ENCODE measurements at regions of chr6 and their contacts with region 1.

Region 1: DNA sequence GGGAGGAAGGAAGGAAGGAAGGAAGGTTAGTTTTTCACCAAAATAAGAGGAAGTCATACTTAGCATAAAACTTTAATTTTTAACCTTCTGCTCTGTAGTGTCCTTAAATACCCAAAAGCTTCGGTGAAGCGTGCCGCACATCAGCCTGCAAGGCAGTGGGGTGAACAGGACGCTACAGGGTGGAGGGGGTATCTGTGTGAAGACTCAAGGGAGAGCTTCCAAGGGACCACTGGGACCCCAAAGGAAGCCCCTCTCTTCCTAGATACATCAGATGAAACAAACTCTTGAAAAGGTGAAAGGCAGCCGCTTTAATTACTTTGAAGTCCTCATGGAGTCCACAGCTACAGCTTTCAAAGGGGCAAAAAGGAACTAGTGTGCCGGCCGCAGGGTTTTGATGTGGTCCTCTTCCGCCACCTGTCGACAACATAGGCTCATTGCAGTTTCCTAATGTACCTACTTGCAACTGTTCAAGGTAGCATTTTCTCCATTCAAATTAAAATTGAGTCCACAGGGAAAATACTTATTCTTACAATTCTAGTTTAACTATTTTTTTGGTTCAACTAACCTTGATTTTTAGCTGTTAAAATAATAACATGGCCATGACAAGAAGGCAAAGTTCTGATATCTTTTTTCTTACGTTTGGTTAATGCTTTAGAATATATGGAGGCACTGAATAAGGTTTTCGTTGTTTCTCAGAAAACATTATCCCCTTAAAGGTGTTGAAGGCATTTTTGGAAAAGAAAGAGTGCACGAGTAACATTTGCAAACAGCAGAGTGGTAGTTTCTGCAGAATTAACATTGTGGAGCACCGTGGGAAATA is 135.0 kb upstream of the RIPOR2 start:
- DNase-seq: peak; percentile 90
- ATAC-seq: peak; percentile 95
- H3K4me3 Mint-ChIP-seq: peak overlapping the region; percentile 53
- H3K27ac Mint-ChIP-seq: peak overlapping the region; percentile 91
- H3K4me1 Mint-ChIP-seq: peaks cover 7% of the 10 kb centered on the region
- H3K27me3 Mint-ChIP-seq: peaks cover 3% of the 10 kb centered on the region

Region 2: GRCh38 chr6:24910961-24911712 is 159.6 kb before region 1 on chr6:
- CTCF ChIA-PET with region 1: interaction called, 13 read pairs
- POLR2A ChIA-PET with region 1: no interaction called
- DNase-seq: no peak
- ATAC-seq: peak; percentile 42
- H3K4me3 Mint-ChIP-seq: peak overlapping the region; percentile 81
- H3K27ac Mint-ChIP-seq: peak overlapping the region; percentile 87
- H3K4me1 Mint-ChIP-seq: peaks cover 94% of the 10 kb centered on the region
- H3K27me3 Mint-ChIP-seq: no peaks in the 10 kb centered on the region

Region 3: DNA sequence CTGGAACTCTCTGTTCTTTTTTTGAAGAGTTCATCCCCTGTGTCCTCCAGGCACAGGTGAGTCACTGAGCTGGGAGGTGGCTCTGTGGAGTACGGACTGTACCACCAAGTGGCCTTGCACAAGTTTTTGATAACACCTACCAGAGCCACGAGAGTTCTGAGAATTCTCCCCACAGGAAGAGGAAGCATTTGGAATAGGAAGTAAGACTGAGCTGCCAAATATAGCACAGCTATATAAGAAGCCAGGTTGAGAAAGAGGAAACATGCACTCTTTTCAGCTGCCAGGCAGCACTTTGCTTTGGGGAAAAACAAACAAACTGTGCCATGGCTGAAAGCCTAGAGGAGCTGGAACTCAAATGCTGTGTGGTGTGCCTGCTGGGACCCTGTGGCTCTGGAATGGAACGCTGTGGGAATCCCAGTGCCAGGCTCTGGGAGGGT is 64.2 kb before region 1 on chr6:
- CTCF ChIA-PET with region 1: interaction called, 18 read pairs
- POLR2A ChIA-PET with region 1: no interaction called
- DNase-seq: peak; percentile 76
- ATAC-seq: peak; percentile 84
- H3K4me3 Mint-ChIP-seq: peak overlapping the region; percentile 58
- H3K27ac Mint-ChIP-seq: peak overlapping the region; percentile 92
- H3K4me1 Mint-ChIP-seq: peaks cover 82% of the 10 kb centered on the region
- H3K27me3 Mint-ChIP-seq: no peaks in the 10 kb centered on the region

Region 4: GRCh38 chr6:25027221-25027916 is 43.4 kb before region 1 on chr6:
- CTCF ChIA-PET with region 1: interaction called, 159 read pairs
- POLR2A ChIA-PET with region 1: interaction called, 17 read pairs
- DNase-seq: peak; percentile 88
- ATAC-seq: peak; percentile 97
- H3K4me3 Mint-ChIP-seq: peak overlapping the region; percentile 65
- H3K27ac Mint-ChIP-seq: peak overlapping the region; percentile 81
- H3K4me1 Mint-ChIP-seq: peaks cover 48% of the 10 kb centered on the region
- H3K27me3 Mint-ChIP-seq: no peaks in the 10 kb centered on the region

Region 5: DNA sequence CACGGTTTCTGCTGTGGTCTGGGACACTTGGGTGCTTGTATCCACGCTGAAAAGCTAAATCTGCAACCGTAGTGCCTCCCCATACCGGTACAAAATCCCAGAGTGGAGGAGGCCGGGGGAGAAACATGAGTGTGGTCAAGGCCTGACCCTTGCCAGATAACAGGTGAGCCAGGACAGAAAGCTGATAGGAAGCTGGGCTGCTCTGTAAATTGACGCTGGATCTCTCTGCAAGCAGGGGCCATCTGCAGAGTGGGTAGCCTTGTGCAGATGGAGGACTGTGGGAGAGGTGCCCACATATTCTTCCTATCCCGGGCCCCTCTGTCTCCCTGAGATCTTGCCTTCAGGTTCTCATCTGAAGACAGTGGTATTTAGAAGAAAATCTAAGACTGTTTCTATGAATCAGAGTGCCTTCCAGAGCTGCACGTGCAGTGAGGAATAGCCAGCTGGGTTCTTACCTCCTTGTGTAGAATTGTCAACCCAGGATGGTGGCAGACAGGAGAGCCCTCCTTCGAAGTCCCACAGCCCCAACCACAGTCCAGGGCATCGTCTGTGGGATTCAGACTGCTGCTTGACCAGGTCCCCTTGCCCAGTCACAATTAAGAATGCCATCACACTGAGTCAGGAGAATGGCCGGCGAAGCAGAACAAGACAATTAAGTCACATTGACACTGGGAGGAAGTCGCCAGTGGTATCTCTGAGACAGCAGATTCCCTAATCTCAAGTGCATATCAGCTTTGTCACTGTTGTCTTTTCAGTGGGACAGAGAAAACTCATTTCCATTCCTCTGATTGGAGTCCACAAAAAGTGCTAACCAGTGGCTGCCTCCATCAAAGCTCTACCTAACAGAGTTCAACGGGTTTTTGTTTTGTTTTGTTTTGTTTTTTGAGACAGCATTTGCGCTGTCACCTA is 35.0 kb before region 1 on chr6:
- CTCF ChIA-PET with region 1: interaction called, 159 read pairs
- POLR2A ChIA-PET with region 1: no interaction called
- DNase-seq: peak; percentile 39
- ATAC-seq: peak; percentile 45
- H3K4me3 Mint-ChIP-seq: peak overlapping the region; percentile 73
- H3K27ac Mint-ChIP-seq: peak overlapping the region; percentile 81
- H3K4me1 Mint-ChIP-seq: peaks cover 68% of the 10 kb centered on the region
- H3K27me3 Mint-ChIP-seq: no peaks in the 10 kb centered on the region

Region 6: DNA sequence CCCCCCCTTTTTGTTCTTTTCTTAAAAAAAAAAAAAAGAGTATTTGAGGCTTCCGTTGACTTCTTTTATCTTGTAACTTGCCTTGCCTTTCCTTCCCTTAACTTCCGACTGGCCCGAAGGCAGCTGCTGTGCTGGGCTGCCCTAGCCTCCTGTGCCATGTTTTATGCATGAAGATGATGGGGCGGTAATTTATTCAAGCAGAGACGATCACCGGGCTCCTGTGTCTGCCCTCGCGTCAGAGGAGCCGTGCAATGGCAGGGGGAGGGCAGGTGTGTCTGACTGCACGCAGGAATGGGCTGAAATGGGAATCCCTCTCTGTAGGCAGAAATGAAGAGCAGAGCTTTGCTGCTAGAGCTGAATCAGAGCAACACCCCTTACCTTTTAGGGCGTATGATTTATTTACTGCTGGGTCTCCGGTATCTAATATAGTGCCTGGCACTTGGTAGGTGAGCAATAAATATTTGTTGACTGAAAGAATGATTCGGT is 28.7 kb before region 1 on chr6:
- CTCF ChIA-PET with region 1: interaction called, 65 read pairs
- POLR2A ChIA-PET with region 1: interaction called, 4 read pairs
- DNase-seq: peak; percentile 62
- ATAC-seq: peak; percentile 72
- H3K4me3 Mint-ChIP-seq: peak overlapping the region; percentile 92
- H3K27ac Mint-ChIP-seq: peak overlapping the region; percentile 94
- H3K4me1 Mint-ChIP-seq: peaks cover 60% of the 10 kb centered on the region
- H3K27me3 Mint-ChIP-seq: peaks cover 5% of the 10 kb centered on the region

Region 7: GRCh38 chr6:25053875-25054371 is 16.8 kb before region 1 on chr6:
- CTCF ChIA-PET with region 1: interaction called, 40 read pairs
- POLR2A ChIA-PET with region 1: no interaction called
- DNase-seq: no peak
- ATAC-seq: no peak
- H3K4me3 Mint-ChIP-seq: no peak overlapping the region
- H3K27ac Mint-ChIP-seq: peak overlapping the region; percentile 44
- H3K4me1 Mint-ChIP-seq: peaks cover 89% of the 10 kb centered on the region
- H3K27me3 Mint-ChIP-seq: no peaks in the 10 kb centered on the region

Region 8: DNA sequence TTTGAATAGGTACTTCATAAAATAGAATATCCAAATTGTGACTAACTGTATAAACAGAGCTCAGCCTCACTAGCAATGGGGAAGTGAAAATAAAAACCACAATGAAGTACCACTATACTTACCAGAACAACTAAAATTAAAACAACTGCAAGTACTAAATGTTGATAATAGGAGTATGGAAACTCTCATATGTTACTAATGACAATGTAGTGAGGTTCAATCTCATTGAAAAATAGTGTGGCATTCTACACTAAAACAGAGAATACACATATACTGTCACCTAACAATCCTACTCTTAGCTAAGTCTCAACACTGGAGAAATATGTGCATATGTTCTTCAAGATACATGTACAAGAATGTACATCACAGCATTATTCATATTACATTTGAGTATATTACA is 76.5 kb after region 1 on chr6:
- CTCF ChIA-PET with region 1: no interaction called
- POLR2A ChIA-PET with region 1: no interaction called
- DNase-seq: no peak
- ATAC-seq: no peak
- H3K4me3 Mint-ChIP-seq: no peak overlapping the region
- H3K27ac Mint-ChIP-seq: no peak overlapping the region
- H3K4me1 Mint-ChIP-seq: peaks cover 24% of the 10 kb centered on the region
- H3K27me3 Mint-ChIP-seq: no peaks in the 10 kb centered on the region

Region 9: DNA sequence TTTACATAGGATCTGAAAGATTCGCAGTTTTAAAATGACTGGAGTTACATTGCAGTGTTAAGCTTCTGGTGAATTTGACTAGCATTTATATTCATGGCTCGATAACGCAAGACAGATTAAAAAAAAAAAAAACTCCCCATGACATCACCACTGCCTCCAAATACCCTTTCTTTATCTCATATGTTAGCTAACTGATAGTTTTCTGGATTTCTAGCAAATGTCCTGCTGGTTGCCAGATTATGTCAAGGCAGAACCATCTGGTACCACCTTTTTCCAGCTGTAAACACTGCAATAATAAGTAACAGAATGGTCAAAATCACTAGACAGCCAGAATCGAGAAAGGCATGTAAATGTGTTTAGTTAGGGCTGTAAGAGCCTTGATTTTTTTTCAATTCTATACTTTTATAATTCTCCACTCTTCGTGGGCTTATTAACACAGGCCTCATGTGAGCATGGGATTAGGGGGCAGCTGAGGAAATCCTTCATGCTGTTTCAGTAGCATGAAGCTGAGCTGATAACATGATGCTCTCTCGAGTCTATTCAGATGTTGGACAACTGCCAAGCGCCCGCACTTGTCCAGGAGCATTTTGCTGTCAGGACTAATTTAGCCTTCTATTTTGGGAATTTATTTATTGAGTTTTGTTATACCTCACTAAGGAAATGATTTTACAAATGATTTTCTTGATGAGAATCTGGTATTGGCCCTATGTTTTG is 415.2 kb after region 1 on chr6:
- CTCF ChIA-PET with region 1: no interaction called
- POLR2A ChIA-PET with region 1: no interaction called
- DNase-seq: no peak
- ATAC-seq: no peak
- H3K4me3 Mint-ChIP-seq: no peak overlapping the region
- H3K27ac Mint-ChIP-seq: no peak overlapping the region
- H3K4me1 Mint-ChIP-seq: peaks cover 7% of the 10 kb centered on the region
- H3K27me3 Mint-ChIP-seq: no peaks in the 10 kb centered on the region